Posterior vena cava (tissue), 2 donors: ENCODE measurements at regions of chr22 and their contacts with region 1.

Region 1: DNA sequence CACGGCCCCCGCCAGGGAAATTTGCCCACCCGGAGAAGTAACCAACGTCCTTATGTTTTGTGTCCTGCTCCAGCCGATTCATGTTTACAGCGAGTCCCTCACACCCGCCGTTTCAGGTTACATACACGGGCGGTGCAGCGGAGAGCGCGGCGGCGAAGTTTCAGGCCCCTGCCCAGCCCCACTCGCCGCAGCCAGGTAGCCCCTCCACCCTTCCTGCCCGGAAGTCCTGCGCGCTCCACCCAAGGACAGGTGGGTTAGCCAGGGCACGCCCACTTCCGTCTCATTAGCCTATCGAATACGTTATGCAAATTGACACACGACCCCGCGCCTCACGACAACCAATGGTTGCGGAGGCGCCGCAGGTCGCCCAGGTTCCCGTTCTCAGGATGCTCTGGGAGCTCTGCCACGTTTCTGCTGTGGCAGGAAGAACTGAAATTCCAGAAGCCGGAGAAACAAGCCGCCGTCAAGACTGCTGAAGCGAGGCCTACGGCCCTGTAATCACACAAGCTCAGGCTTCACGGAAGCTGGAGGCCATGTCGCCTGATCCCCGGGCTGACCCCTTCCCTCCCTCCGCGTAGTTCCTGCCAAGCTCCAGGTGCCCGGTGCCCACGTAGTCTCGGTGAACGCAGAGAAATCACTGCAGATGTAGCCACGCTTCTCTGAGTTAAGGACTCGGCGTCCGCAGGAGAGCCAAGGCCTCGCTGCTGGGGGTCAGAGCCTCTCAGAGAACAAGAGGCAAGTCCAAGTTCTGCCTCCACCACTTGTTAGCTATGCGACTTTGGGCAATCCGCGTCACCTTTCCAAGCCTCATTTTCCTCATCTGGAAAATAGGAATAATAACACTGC is 22.4 kb upstream of the MYH9 start:
- DNase-seq: peak; percentile 86

Region 2: GRCh38 chr22:36377022-36377631 is 33.0 kb before region 1 on chr22:
- intact Hi-C with region 1: loop called in 1 of 2 experiments (anchors 1 kb)
- DNase-seq: no peak

Region 3: DNA sequence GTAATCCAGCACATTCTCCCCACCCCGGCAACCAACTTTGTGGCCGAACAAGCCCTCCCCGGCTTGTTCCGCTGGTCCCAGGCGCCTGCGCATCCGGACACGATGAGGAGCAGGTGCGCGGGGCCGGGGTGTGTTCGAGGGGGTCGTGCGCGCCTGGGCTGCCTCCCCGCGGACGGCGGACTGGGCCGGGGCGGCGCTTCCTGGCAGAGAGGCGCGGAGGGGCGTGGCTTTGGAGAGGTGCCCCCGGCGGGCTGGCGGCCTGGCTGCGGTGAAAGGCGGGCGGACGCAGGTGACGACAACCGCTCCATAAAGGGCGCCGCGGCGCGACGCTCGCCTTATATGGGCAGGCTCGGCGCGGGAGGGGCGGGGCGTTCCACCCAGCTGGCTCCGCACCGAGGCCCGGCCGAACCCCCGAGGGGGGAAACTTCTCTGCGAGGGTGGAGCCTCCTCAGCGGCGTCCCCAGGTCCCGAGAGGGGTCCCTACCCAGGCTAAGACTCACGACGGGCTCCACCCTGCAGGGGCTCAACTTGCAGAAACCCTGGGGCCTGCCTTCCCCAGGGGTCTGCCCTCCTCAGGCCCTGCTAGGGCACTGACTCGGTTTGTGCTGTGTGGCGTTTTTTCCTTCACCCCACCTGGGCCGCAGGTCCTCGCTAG is 44.9 kb after region 1 on chr22:
- intact Hi-C with region 1: loop called in 1 of 2 experiments (anchors 1 kb)
- DNase-seq: peak; percentile 98

Region 4: DNA sequence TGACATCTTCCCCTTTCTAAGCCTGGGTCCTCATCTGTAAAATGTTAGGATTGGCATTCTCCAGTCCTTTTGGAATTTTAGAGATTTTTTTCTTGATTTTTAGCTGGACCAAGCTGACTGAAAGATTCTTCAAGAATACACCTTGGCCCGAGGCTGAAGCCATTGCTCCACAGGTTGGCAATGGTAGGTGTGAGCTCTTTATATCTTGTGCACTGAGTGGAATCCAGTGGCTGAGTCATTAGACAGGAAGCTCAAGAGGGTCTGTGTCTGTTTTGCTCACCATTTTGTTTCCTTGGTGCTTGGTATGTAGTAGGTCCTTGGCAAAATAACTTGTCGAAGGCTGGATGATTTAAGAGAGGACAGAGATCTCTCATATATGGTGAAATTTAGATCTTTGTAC is 1445.3 kb after region 1 on chr22:
- intact Hi-C with region 1: no loop called
- DNase-seq: no peak